A673 (cell line): ENCODE measurements at regions of chr11 and their contacts with region 1.

Region 1: DNA sequence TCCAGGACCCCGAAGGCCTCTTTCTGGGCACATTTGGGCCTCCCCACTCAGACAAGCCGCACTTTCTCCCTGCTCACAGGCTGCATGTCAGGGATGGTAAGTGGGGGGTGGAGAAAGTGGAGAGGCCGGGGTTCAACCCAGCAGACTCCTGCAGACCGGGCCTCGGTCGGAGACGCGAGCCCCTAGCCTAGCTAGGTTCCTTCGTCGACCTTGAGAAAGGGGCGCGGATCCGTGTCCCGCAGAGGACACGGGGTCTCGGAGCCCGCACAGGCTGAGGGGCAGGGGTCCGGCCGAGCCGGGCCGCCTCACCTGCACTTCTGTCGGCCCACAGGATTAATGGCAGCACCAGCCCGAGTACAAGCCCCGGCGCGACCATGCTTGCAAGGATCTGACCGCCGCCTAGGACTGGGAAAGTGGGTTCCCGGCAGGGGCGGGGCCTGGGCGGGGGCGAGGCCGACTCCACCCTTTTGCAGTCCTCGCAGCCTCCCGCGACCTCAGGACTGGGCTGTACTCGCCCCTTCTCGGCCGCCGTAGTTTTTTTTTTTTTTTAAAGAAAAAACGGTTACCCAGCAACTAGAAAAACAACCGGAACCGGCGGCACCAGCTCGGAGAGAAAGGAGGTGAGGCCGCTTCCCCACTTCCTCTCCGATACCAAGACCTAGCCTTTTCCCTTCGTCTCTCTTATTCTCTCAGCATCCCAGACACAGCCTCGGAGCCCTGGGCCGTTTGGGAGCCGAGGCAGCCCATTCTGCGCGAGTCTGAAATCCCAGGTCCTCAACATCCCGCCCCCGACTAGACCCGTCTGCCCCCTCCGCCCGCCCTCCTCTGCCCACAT is at the starts of genes SIAE and SPA17:
- DNase-seq: peak; percentile 97
- H3K4me3 ChIP-seq: peak within 1 kb of the TSS; percentile 73
- H3K27ac ChIP-seq: peak within 1 kb of the TSS; percentile 76
- H3K4me1 ChIP-seq: peaks cover 10% of the 10 kb centered on the region
- H3K27me3 ChIP-seq: no peaks in the 10 kb centered on the region
- CTCF ChIP-seq: no peak
- total RNA-seq, gene SIAE: 11.2 and 12.0 TPM in 2 replicates
- total RNA-seq, gene SPA17: 22.9 and 25.8 TPM in 2 replicates

Region 2: GRCh38 chr11:124746621-124747243 is 73.2 kb after region 1 on chr11:
- CTCF ChIA-PET with region 1: interaction called, 6 read pairs
- POLR2A ChIA-PET with region 1: no interaction called
- intact Hi-C with region 1: loop called (anchors 1 kb)
- DNase-seq: peak; percentile 84
- H3K4me3 ChIP-seq: peak overlapping the region; percentile 48
- H3K27ac ChIP-seq: no peak overlapping the region
- H3K4me1 ChIP-seq: peaks cover 17% of the 10 kb centered on the region
- H3K27me3 ChIP-seq: no peaks in the 10 kb centered on the region
- CTCF ChIP-seq: peak; percentile 88

Region 3: DNA sequence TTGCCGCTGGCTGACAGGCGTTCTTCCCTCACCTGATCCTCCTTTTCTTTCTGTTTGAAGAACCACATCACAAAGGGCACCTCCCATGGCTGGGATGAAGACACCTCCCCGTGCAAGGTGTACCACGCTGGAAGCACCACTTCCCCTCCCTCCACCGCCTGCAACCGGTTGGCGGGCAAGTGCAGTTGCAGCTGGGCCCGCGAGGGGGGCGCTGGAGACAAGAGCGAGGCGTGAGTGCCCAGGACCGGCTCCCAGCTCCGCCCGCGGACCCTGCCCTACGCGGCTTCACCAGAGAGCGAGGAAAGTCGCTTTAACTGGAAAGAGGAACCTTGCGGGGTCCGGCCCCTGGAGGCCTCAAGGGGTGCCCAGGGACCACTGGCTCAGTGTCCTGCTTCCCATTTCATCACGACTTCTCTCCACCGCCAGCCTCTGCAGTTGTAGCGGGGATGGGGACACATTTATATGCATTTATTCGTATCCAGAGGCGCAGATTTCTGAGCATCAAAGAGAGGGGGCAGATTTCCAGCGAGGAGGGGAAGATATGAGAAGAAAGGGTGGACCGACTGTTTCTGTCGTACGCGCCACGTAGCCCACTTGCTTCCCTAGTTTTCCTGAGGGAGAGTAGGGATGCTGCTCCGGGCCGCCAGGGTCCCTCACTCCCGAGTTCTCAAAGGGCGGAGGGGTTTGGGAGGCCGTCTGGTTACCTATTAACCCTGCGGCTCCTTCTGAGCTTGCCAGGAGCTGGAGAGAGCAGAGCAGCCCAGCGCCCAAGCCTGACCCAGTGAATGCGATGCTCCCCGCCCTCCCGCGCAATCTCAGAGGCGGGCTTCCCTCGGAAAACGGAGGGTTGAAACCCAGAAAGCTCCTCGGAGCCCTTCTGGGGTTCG is 85.0 kb after region 1 on chr11:
- CTCF ChIA-PET with region 1: interaction called, 21 read pairs
- POLR2A ChIA-PET with region 1: no interaction called
- intact Hi-C with region 1: loop called (anchors 1 kb)
- DNase-seq: peak; percentile 88
- H3K4me3 ChIP-seq: peak overlapping the region; percentile 37
- H3K27ac ChIP-seq: no peak overlapping the region
- H3K4me1 ChIP-seq: peaks cover 10% of the 10 kb centered on the region
- H3K27me3 ChIP-seq: no peaks in the 10 kb centered on the region
- CTCF ChIP-seq: peak; percentile 94

Region 4: GRCh38 chr11:124865921-124866583 is 192.5 kb after region 1 on chr11:
- CTCF ChIA-PET with region 1: interaction called, 4 read pairs
- POLR2A ChIA-PET with region 1: no interaction called
- intact Hi-C with region 1: loop called (anchors 2 kb)
- DNase-seq: peak; percentile 60
- H3K4me3 ChIP-seq: peak overlapping the region; percentile 30
- H3K27ac ChIP-seq: no peak overlapping the region
- H3K4me1 ChIP-seq: peaks cover 8% of the 10 kb centered on the region
- H3K27me3 ChIP-seq: peaks cover 92% of the 10 kb centered on the region
- CTCF ChIP-seq: peak; percentile 92